ENCODE measurements at regions of chr1 and their contacts with region 1.

Region 1: DNA sequence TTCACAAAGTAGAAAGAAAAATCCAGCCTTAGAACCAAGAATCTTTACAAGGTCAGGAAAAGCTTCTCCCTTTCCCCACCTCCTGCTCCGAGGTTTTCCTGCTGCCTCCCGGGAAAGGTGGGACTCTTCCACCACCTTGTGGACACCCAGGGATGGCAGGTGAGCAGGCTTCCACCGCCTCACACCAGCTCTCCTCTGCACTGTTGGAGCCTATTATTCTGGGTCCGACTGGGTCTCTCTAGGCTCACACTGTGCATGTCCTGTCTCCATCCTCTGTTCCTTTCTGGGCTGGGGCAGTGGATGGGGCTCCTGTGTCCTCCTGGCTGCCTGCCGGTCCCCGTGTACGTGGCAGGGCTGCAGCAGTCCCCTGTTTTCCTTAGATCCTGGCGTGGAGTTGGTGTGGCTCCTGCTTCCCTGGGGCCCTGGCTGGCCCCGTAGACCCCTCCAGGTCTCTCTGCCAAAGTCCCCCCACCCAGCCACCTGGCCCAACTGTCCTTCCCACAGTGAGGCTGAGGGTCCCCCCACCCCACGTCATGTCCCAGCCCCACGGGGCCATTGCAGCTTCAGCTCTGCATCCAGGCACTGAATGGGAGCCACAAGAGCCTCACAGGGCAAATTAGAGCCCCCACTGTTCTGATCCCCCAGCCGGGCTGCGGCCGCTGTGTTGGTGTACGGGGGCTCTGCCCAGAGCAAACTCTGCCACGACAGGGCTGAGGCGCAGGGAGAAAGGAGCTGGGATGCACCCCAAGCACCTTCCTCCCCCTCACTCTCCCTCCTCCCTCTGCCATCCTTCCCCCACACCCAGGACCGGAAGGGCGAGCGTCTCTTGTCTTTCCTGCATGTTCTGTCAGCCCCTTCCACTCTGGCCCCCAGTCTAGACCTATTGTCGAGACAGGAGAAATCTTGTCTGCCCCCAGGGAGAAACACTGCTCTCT is 3.3 kb upstream of the SLC45A1 start:
- DNase-seq: peak; percentile 73 to 85
- H3K4me3 ChIP-seq: no peak overlapping the region
- H3K4me1 ChIP-seq: no peaks in the 10 kb centered on the region
- H3K27me3 ChIP-seq: peaks cover 11% of the 10 kb centered on the region

Region 2: DNA sequence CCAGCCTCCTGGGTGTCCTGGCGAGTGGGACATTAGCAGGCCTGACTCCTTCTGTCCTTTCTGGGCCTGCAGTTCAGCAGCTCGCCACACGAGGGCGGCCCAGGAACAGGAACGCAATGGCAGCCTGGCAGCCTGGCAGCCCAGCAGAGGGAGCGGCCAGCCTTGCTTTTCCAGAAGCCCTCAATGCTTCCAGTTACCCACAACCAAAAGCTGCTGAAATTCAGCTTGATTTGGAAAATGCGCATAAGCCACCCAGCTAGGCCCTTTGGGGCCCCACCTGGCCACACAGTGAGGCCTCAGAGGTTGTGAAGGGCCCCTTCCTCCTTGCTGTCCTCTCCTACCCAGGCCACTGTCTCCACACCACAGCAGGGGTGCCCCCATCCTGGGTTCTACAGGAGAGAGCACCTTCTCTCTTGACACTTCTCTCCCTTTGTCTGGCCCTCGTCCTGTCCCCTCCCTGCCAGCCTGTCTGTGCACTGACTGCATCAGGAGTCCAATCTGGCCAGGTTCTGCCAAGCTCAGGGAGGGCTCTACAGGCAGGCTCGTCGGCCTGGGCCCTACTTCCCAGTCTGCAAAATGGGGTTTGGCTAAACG is 646.9 kb before region 1 on chr1:
- in situ Hi-C with region 1: loop called (anchors 25 kb)
- DNase-seq: peak; percentile 57 to 92
- H3K4me3 ChIP-seq: no peak overlapping the region
- H3K4me1 ChIP-seq: no peaks in the 10 kb centered on the region; the same call in none of the 2 replicates
- H3K27me3 ChIP-seq: no peaks in the 10 kb centered on the region

Region 3: GRCh38 chr1:7989762-7990428 is 324.7 kb before region 1 on chr1:
- in situ Hi-C with region 1: loop called (anchors 10 kb)
- DNase-seq: no peak
- H3K4me3 ChIP-seq: no peak overlapping the region
- H3K4me1 ChIP-seq: no peaks in the 10 kb centered on the region
- H3K27me3 ChIP-seq: no peaks in the 10 kb centered on the region

Region 4: DNA sequence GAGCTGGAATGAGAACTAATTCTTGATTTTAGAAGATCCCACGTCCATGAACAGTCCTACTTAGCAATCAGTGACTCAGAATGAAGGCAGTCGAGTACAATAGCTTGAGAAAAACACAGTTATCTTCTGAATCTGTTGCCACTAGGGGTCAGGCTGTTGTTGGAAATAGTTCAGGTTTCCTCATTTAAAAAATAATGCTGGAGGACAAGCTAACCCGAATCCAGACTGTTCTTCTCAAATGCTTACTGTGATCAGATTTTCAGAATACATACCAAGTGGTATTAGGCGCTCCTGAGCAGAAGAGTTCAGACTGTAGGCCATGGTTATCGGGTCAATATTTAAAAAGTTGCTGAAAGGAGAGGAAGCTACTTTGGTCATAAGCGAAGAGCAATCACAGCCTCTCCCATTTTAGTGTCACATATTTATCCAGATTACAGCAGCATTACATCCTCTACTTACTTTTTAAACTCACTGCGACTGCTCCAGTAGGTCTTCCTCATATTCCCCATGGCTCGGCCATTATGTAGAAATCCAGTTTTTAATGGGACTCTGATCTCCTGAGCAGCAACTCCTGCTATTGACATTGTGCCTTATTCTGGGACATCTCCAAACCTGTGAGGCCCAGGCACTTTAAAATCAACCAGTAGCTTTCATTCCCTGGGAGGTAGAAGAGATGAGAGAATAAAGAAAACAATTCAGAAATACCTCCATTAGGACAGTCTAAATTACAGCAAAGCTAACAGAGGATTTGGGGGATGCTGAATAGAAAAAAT is 299.4 kb before region 1 on chr1:
- in situ Hi-C with region 1: loop called (anchors 5 kb)
- DNase-seq: peak; percentile 67 to 70
- H3K4me3 ChIP-seq: no peak overlapping the region
- H3K4me1 ChIP-seq: peaks cover 19% of the 10 kb centered on the region
- H3K27me3 ChIP-seq: peaks cover 3% of the 10 kb centered on the region; the same call in 1 of the 2 replicates